Activated T-helper 1 cell treated with anti-CD3 and anti-CD28 coated beads, Interleukin-12 subunit alpha, Interleukin-12 subunit beta, Interleukin-2, Interleukin-4 antibody, amounts not matched to agents 30 ng/mL and 10 ng/mL and 1 ng/mL, durations not matched to agents 14 hours and 24 hours and 36 hours (primary cell): ENCODE measurements at regions of chr2 and their contacts with region 1.

Region 1: DNA sequence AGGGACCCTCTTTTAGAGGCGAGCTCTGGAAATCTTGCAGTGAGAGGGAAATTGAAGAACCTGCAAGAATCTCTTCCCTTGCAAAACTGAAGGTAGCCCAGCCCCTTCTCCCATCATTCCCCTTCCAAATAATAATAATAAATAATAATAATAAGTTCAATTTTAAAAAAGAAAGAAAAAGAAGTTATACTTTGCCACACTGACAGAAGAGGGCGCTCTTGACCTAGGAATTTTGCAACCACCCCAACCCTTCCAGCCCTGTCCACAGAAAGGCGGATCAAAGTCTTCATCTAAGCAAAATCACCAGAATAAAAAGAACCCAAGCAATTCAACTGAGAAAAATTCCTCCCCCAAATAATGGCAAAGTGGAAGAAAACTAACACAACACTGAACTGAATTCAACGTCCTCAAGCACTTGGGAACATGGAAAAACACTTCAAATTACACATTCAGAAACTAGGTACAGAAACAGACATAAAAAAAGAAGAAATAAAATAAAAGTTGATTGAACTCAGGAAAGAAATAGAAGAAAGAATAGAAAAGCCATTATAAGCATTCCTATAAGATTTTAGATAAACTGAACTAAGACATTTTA is 98.9 kb upstream of the GLS start:
- DNase-seq: peak; percentile 11
- H3K4me3 Mint-ChIP-seq: no peak overlapping the region
- H3K27ac Mint-ChIP-seq: peak overlapping the region; percentile 45
- H3K4me1 Mint-ChIP-seq: peaks cover 43% of the 10 kb centered on the region
- H3K27me3 Mint-ChIP-seq: no peaks in the 10 kb centered on the region

Region 2: GRCh38 chr2:190468814-190469569 is 312.7 kb before region 1 on chr2:
- intact Hi-C with region 1: no loop called
- DNase-seq: no peak
- H3K4me3 Mint-ChIP-seq: no peak overlapping the region
- H3K27ac Mint-ChIP-seq: no peak overlapping the region
- H3K4me1 Mint-ChIP-seq: peaks cover 19% of the 10 kb centered on the region
- H3K27me3 Mint-ChIP-seq: no peaks in the 10 kb centered on the region

Region 3: DNA sequence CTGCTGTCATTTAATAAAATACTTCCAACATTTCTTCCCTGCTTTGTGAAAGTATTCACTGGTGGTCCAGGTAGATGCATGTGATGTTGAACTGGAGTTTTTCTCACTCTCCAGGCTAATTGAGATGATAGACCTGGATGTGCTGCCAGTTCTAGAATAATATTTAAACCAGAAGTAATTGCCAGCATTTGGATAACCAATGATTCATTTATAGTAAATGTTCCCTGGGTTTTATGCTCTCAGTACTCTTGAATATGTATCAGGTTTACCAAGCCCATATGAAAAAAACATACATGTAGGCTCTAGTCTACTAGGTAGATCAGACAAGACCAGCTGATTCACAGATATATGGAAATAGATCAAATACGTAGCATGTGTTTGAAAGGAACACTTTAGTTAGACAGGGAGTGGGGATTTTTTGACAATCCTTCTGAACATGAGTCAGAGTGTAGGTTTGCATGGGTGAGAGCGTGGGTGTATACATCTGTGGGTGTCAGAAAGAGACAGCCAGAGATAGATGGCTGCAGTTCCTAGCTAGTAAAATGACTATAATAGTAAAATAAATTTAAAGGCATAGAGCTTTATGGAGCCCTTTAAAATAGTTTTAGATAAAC is 17.7 kb before region 1 on chr2:
- intact Hi-C with region 1: loop called (anchors 2 kb)
- DNase-seq: no peak
- H3K4me3 Mint-ChIP-seq: peak overlapping the region; percentile 3
- H3K27ac Mint-ChIP-seq: peak overlapping the region; percentile 11
- H3K4me1 Mint-ChIP-seq: peaks cover 44% of the 10 kb centered on the region
- H3K27me3 Mint-ChIP-seq: no peaks in the 10 kb centered on the region

Region 4: GRCh38 chr2:190947711-190948251 is 166.1 kb after region 1 on chr2:
- intact Hi-C with region 1: loop called (anchors 1 kb)
- DNase-seq: no peak
- H3K4me3 Mint-ChIP-seq: no peak overlapping the region
- H3K27ac Mint-ChIP-seq: peak overlapping the region; percentile 51
- H3K4me1 Mint-ChIP-seq: peaks cover 6% of the 10 kb centered on the region
- H3K27me3 Mint-ChIP-seq: no peaks in the 10 kb centered on the region

Region 5: DNA sequence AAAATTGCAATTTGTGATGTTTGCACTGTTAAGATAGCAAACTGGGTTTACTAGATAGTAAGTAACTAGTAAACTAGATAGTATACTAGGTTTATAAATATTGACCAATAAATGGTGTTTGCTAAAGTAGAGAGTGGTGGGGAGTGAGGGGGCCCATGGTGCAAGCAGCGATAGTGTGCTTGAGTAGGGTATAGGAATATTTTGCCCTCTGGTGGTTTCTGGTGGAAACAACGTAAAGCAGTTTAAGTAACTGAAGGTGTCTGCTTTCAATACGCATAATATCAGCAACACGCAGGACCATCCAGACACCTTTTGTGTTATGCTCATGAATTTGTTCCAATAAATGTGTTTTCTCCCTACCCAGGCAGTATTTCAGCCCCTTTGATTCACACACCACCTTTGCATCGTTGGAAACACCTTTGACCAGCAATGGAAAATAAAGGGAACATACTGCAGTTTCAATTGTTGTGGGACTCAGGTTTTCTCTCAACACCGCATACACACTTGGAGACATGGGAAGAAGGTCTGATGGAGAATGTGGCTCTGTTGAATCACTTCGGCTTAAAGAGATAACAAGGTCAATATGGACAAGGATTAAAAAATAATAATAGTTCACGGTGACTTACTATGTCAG is 248.9 kb after region 1 on chr2:
- intact Hi-C with region 1: loop called (anchors 1 kb)
- DNase-seq: peak; percentile 31
- H3K4me3 Mint-ChIP-seq: no peak overlapping the region
- H3K27ac Mint-ChIP-seq: peak overlapping the region; percentile 42
- H3K4me1 Mint-ChIP-seq: peaks cover 70% of the 10 kb centered on the region
- H3K27me3 Mint-ChIP-seq: no peaks in the 10 kb centered on the region